CD8-positive, alpha-beta T cell (primary cell): ENCODE measurements at regions of chr1 and their contacts with region 1.

Region 1: DNA sequence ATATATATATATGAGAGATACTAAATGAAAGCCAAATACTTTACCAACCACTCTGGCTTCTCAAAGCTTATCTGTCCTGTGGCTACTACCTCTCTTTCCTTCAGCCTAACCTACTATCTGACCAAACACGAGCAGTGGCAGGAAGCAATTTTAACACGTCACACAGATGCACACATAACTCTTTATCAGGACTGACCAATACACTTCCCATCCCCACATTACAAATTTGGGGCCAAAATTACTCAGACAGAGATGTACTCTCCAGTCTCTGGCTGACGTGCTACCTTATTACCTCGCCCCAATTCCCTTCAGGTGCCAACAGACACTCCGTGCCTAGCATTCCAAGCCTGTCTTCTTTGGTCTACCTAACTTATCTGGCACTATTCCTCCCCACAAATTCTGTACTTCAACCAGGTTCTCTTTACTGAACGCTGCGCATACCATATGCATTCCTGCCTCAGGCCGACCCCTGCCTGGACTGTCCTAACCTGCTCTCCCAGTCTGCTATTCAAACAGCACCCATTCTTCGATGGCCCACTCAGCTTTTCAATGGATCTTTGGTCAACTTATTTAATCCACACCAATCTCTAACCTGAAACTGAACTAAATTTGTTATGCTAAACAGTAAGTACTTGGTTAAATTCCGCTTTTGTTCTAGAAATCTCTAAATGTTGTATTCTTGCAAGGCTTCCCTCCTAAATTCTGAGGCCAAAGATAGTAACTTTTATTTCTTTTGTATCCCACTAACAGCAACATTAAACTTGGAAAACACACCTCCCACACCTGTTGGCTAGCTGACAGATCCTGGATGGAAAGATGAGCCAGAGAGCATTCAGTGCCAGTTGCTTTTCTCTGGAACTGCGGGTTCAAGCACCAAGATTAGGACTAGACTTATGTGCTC is 27.9 kb downstream of the RERE start:
- DNase-seq: no peak
- ATAC-seq: no peak
- H3K4me3 ChIP-seq: no peak overlapping the region
- H3K4me3 Mint-ChIP-seq: no peak overlapping the region
- H3K27ac ChIP-seq: no peak overlapping the region
- H3K27ac Mint-ChIP-seq: no peak overlapping the region
- H3K4me1 ChIP-seq: no peaks in the 10 kb centered on the region
- H3K4me1 Mint-ChIP-seq: peaks cover 6% of the 10 kb centered on the region
- H3K27me3 ChIP-seq: no peaks in the 10 kb centered on the region
- H3K27me3 Mint-ChIP-seq: no peaks in the 10 kb centered on the region
- CTCF ChIP-seq: no peak

Region 2: DNA sequence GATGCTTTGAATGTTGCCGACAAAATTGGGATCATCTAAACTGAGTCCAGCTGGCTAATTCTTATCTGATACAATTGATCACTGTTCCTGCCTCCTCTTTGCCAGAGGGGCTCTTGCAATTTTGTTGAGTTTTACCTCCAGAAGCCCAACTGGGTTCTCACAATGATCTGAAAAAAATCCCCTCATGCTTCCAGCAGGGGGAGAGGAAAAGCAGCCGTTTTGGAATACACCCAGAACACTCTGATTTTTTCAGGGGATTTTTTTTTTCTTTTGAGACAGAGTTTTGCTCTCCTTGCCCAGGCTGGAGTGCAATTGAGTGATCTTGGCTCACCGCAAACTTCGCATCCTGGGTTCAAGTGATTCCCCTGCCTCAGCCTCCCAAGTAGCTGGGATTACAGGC is 41.8 kb after region 1 on chr1:
- CTCF ChIA-PET with region 1: no interaction called
- POLR2A ChIA-PET with region 1: no interaction called
- intact Hi-C with region 1: loop called in 1 of 2 experiments (anchors 5 kb)
- DNase-seq: no peak
- ATAC-seq: no peak
- H3K4me3 ChIP-seq: no peak overlapping the region
- H3K4me3 Mint-ChIP-seq: no peak overlapping the region
- H3K27ac ChIP-seq: no peak overlapping the region
- H3K27ac Mint-ChIP-seq: no peak overlapping the region
- H3K4me1 ChIP-seq: peaks cover 7% of the 10 kb centered on the region
- H3K4me1 Mint-ChIP-seq: peaks cover 14% of the 10 kb centered on the region
- H3K27me3 ChIP-seq: no peaks in the 10 kb centered on the region
- H3K27me3 Mint-ChIP-seq: no peaks in the 10 kb centered on the region
- CTCF ChIP-seq: no peak